ENCODE measurements at regions of chr16 and their contacts with region 1.

Region 1: GRCh38 chr16:8674413-8675022 is at the start of gene ABAT:
- DNase-seq: peak; percentile 88 to 93
- H3K4me3 ChIP-seq: peak within 1 kb of the TSS; percentile 80
- H3K4me3 Mint-ChIP-seq: peak within 1 kb of the TSS; percentile 83
- H3K27ac Mint-ChIP-seq: peak within 1 kb of the TSS; percentile 35
- H3K4me1 ChIP-seq: peaks cover 44% of the 10 kb centered on the region
- H3K4me1 Mint-ChIP-seq: peaks cover 19% of the 10 kb centered on the region
- H3K27me3 ChIP-seq: no peaks in the 10 kb centered on the region
- H3K27me3 Mint-ChIP-seq: no peaks in the 10 kb centered on the region
- CTCF ChIP-seq: no peak
- total RNA-seq, gene ABAT: 28.8 and 34.9 TPM in 2 replicates

Region 2: DNA sequence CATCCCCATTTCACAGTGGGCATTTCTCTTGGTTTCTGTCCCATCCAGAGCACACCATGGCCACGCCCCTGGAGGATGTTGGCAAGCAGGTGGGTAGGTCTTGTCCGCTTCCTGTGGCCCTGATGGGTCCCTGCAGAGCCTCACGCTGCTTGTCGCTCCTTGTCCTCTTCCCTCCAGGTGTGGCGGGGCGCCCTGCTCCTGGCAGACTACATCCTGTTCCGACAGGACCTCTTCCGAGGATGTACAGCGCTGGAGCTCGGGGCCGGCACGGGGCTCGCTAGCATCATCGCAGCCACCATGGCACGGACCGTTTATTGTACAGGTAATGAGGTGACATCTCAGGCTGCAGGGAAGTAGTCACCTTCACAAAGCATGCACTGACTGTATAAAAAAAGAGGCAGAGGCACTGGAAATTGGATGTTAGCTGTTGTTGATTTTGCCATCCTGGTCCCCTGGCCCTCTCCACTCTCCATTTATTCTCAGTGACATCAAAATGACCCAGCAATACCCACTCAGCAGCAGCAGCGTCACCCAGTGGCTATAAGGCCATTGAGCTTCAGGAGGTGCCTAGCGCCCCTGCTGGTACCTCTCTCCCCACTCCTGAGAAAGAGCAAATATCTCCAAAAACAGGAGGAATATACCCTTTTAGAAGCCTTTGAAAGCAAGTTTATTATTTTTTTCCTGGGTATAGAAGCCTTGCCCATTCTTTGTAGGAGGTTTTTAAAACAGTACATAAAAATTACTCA is 39.4 kb before region 1 on chr16:
- CTCF ChIA-PET with region 1: no interaction called
- POLR2A ChIA-PET with region 1: no interaction called
- intact Hi-C with region 1: no loop called
- DNase-seq: peak in 1 of 2 experiments; percentile 15
- H3K4me3 ChIP-seq: no peak overlapping the region
- H3K4me3 Mint-ChIP-seq: no peak overlapping the region
- H3K27ac Mint-ChIP-seq: no peak overlapping the region
- H3K4me1 ChIP-seq: no peaks in the 10 kb centered on the region
- H3K4me1 Mint-ChIP-seq: no peaks in the 10 kb centered on the region
- H3K27me3 ChIP-seq: no peaks in the 10 kb centered on the region
- H3K27me3 Mint-ChIP-seq: no peaks in the 10 kb centered on the region
- CTCF ChIP-seq: peak; percentile 31 to 69

Region 3: DNA sequence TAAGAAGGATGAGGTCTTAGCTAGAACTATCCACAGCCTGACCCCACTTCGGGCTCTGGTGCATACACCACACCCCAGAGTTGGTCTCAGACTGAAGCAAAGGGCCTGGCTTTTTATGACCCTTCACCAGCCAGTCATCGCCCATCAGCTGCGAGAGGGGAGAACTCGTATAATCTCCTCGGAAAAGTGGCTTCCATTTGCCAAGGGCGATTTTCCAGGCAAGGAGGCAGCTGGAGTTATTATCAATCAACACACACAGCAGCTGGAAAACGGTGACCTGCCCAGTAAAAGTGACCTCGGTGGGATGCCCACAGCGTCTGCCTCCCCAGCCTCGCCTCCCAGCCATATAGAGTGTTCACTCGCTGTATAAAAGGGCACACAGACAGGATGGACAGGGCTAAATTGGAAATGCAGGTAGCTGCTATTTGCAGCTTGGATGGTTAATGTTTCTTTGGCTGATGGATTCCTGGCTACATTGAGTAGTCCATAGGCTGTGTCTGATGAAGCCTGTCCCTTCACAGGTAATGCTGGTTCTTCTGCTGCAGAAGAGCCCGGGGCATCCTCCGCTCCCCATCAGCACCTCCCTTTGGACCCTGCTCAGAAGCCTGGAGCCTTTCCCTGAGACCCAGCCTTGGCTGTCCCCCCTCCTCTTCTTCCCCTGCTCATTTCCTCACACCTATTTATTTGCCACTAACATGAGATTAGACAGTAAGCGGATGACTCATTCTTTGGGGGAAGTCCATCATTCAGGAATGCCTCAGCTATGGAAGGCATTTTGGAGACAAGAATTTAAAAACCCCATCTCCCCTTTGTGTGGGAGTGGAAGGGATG is 77.2 kb after region 1 on chr16:
- CTCF ChIA-PET with region 1: interaction called, 3 read pairs
- POLR2A ChIA-PET with region 1: no interaction called
- intact Hi-C with region 1: loop called (anchors 1 kb)
- DNase-seq: peak; percentile 43 to 47
- H3K4me3 ChIP-seq: no peak overlapping the region
- H3K4me3 Mint-ChIP-seq: no peak overlapping the region
- H3K27ac Mint-ChIP-seq: peak overlapping the region; percentile 83
- H3K4me1 ChIP-seq: peaks cover 43% of the 10 kb centered on the region
- H3K4me1 Mint-ChIP-seq: peaks cover 24% of the 10 kb centered on the region
- H3K27me3 ChIP-seq: no peaks in the 10 kb centered on the region
- H3K27me3 Mint-ChIP-seq: no peaks in the 10 kb centered on the region
- CTCF ChIP-seq: no peak

Region 4: DNA sequence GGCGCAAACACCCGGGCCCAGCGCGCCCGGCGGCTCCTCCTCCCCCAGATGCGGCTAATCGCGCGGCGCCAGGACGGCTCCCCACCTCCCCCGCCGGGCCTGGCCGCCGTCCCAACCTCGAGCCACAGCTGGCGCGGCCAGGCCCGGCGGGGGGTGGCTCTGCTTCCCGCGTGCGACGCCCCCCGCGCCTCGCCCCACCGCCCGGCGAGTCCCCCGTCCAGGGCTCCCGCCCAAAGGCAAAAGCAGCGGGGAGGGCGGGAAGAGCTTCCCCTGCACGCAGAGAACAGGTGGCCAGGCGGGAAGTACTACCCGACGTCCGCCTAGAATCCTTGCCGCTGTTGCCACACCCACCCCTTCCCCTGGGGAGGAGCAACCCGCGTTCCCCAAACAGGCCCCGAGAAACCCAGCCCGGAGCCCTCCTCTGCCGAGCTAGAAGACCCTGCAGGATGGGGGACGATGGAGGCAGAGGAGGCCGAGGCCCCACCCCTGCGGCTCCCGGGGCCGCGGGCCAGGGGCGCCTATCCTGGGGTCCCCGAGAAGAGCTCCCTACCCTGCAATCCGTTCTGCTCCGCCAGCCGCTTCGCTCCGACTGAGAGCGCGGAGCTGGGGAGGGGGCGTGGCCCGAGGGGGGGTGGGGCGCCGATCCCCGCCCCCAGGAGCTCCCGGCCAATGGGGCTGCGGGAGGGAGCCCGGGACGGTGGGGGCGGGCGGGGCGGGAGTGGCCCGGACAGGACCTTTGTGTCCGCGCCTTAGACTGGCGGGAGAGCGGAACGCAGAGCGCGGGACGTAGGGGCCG is 194.1 kb after region 1 on chr16 and contains the start of gene CARHSP1:
- CTCF ChIA-PET with region 1: no interaction called
- POLR2A ChIA-PET with region 1: interaction called, 3 read pairs
- intact Hi-C with region 1: loop called (anchors 5 kb)
- DNase-seq: peak; percentile 89
- H3K4me3 ChIP-seq: peak within 1 kb of the TSS; percentile 62
- H3K4me3 Mint-ChIP-seq: peak within 1 kb of the TSS; percentile 97
- H3K27ac Mint-ChIP-seq: peak within 1 kb of the TSS; percentile 97
- H3K4me1 ChIP-seq: peaks cover 42% of the 10 kb centered on the region
- H3K4me1 Mint-ChIP-seq: peaks cover 15% of the 10 kb centered on the region
- H3K27me3 ChIP-seq: no peaks in the 10 kb centered on the region
- H3K27me3 Mint-ChIP-seq: no peaks in the 10 kb centered on the region
- CTCF ChIP-seq: no peak
- total RNA-seq, gene CARHSP1: 103 and 105 TPM in 2 replicates